Dorsolateral prefrontal cortex (tissue), 120 donors: ENCODE measurements at regions of chr9 and their contacts with region 1.

Region 1: DNA sequence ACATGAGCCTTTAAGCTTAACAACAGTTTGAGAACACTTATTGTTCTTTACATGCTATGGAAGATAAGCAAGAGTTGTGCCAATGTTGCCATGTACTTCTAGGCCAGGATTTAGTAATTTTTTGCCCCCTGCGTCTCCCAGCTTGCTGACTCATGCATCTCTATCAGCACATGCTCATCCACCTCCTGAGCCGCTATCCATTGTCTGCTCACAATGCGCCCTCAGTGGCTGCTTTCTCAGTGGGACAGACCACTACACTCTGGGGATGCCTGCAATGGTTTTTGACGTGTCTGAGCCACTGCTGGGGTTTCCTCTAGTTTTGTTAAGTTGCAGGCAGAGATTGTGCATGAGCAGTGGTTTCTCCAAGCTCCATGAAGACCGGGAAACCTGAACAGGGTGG is 50.9 kb upstream of the PHF2 start:
- DNase-seq: peak in 3 of 10 donors; percentile 46 to 61 (median 57)
- H3K4me3 ChIP-seq: no peak overlapping the region
- H3K27ac ChIP-seq: peak overlapping the region in 19 of 59 donors; percentile 0 to 65 (median 34)
- H3K27me3 ChIP-seq: no peaks in the 10 kb centered on the region
- CTCF ChIP-seq: no peak

Region 2: DNA sequence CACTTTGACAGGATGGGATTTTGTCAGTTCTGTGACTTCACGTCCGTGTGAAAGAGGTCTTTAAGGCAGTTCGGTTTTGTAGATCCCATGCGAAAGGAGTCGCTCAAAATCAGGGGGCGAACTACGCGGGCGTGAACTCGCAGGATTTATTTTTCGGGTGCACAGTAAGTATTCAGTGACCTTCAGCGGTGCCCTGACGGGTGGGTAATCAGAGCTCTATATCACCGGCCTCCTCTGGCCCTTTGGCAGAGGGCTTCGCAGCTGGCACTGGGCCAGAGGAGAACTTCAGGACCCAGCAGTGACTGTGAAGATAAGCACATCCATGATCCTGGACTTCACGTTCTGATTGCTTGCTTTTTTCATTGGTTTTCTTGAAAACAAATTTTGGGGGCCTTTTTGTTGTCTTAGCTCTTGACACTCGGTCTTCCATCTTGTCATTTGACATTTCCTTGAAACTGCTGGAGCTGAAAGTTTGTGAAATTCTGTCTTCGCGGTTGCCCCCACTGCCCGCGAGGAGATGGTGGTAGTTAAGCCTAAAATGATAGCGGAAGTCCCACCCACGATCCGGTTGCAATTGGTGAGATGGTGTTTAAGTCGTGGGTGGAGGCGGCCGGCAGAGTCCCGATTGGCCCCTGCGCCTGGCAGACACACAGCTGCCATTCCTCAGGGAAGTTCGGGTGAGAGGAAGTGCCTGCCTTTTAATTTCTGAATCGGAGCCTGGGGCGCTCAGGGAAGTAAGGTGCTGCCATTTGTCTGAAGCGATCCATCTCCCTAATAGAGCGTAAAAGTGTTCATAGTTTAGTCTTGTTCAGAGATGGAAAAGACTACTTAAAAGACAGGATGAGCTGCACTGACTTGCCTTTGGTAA is 72.2 kb before region 1 on chr9 and contains the start of gene FAM120AOS:
- intact Hi-C with region 1: loop called in 1 of 2 experiments (anchors 5 kb)
- DNase-seq: peak; percentile 88 to 99 (median 96)
- H3K4me3 ChIP-seq: peak within 1 kb of the TSS; percentile 64 to 97 (median 86)
- H3K27ac ChIP-seq: peak within 1 kb of the TSS; percentile 65 to 99 (median 94)
- H3K27me3 ChIP-seq: no peaks in the 10 kb centered on the region
- CTCF ChIP-seq: peak in 25 of 56 donors; percentile 9 to 55 (median 25)
- total RNA-seq, gene FAM120AOS: 34.2 to 62.8 (median 46.0) TPM

Region 3: DNA sequence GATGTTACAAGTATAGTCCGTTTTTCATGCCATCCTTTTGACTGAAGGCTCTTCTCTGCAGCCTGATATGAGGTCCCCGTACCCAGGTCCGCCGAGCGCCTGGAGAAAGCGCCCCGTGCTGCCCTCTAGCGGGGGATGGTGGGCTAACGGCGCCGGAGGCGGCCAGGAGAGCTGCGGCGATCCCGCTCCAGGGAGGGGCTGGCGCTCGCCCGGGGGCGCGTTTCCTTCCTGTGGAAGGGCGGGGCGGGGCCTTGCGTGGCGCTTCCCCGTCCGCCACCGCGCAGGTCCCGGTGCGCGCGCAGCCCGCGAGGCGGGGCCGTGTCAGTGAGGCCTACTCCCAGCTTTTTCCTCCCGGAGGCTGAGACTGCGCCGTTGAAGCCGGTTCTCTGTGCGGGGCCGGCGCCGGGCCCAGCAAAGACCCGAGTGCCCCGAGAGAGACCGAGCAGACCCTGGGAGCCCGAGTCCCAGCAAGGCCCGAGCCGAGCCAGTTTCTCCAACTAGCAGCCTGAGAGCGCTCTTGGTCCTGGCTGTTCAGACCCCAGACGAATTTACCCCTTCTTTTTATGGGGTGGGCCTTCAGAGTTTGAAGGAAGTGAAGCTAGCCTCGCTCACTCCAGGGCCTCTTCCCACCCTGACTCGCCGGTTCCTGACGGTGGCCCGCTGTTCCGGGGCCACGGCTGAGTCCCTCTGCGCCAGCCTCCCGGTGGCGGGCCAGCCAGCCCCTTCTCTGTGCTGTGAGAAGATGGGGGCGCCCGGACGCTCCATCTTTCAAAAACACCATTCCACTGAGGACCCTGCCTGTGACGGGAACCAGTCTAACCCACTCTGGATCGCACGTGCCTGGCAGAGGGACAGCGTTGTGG is 41.2 kb after region 1 on chr9:
- intact Hi-C with region 1: no loop called
- DNase-seq: peak; percentile 96 to 100 (median 98)
- H3K4me3 ChIP-seq: peak overlapping the region; percentile 44 to 89 (median 73)
- H3K27ac ChIP-seq: peak overlapping the region; percentile 75 to 99 (median 95)
- H3K27me3 ChIP-seq: no peaks in the 10 kb centered on the region
- CTCF ChIP-seq: peak; percentile 75 to 100 (median 98)